Lower leg skin (tissue), 4 donors: ENCODE measurements at regions of chr4 and their contacts with region 1.

Region 1: GRCh38 chr4:18593445-18594002 is 572.0 kb upstream of the LCORL start:
- DNase-seq: peak in 1 of 2 donors; percentile 35
- H3K4me3 ChIP-seq: no peak overlapping the region
- CTCF ChIP-seq: peak in 1 of 3 donors; percentile 38
- POLR2A ChIP-seq: no peak

Region 2: DNA sequence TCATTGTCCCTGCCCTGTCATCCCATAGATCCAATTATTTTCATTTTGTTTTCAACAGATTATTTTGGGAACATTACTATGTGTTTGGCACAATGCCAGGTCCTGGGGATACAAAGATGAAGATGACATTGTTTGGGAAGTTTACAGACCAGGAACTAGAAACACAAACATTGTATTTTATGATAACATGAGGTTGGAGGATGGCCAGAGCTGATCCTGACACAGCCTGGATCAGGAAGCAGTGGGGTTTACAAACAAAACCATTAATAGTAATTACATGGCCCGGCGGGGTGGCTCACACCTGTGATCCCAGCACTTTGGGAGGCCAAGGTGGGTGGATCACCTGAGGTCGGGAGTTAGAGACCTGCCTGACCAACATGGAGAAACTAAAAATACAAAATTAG is 1048.7 kb before region 1 on chr4:
- intact Hi-C with region 1: loop called (anchors 5 kb)
- DNase-seq: no peak
- H3K4me3 ChIP-seq: no peak overlapping the region
- CTCF ChIP-seq: no peak
- POLR2A ChIP-seq: no peak

Region 3: DNA sequence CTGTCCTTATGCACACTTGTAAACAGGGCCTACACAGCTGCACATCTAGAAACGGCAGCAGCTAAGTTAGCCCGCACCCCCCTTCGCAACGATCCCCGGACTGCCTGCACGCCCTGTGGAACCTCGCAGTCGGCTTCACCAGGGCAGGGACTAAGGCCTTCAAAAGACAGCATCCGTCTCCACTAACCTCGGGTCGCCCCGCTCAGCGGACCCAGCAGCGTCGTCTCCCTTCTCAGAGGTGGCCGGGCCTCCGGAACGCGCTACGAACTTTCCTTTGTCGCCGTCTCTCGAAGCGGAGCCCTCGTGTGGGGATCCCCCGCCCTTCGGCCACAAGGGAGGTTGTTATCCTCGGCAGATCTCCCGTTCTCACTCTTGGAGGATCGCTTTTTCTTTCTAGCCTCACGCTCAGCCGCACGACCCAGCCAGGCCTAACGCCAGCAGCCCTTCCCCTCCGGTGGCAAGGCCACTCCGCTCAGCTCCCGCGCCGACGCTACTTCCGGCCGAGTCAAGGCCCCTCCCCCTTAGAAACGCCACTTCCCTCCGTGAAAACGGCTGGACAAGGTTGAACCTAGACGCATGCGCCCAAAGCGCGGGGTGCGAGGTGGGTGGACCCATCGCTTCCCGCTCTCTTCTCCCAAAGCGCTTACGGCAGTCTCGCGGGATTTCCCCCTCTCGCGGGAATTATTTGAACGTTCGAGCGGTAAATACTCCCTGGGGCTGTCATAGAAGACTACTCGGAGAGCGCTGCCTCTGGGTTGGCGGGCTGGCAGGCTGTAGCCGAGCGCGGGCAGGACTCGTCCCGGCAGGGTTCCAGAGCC is 783.1 kb before region 1 on chr4 and contains the starts of genes DCAF16 and NCAPG:
- intact Hi-C with region 1: loop called (anchors 10 kb)
- DNase-seq: peak; percentile 99 to 100
- H3K4me3 ChIP-seq: peak within 1 kb of the TSS; percentile 89
- CTCF ChIP-seq: no peak
- POLR2A ChIP-seq: peak in 1 of 2 donors; percentile 95
- total RNA-seq, gene DCAF16: 28.3 to 36.1 (median 31.9) TPM
- total RNA-seq, gene NCAPG: 0.34 to 5.3 (median 1.8) TPM